Activated CD4-positive, alpha-beta T cell treated with anti-CD3 and anti-CD28 coated beads, Interleukin-2, amount 10 ng/mL, durations not matched to agents 24 days and 14 days (primary cell): ENCODE measurements at regions of chr16 and their contacts with region 1.

Region 1: GRCh38 chr16:28277537-28278388 is 14.6 kb upstream of the SBK1 start:
- DNase-seq: peak; percentile 95
- H3K4me3 Mint-ChIP-seq: peak overlapping the region; percentile 77
- H3K27ac Mint-ChIP-seq: peak overlapping the region; percentile 60
- H3K4me1 Mint-ChIP-seq: peaks cover 28% of the 10 kb centered on the region
- H3K27me3 Mint-ChIP-seq: peaks cover 23% of the 10 kb centered on the region

Region 2: DNA sequence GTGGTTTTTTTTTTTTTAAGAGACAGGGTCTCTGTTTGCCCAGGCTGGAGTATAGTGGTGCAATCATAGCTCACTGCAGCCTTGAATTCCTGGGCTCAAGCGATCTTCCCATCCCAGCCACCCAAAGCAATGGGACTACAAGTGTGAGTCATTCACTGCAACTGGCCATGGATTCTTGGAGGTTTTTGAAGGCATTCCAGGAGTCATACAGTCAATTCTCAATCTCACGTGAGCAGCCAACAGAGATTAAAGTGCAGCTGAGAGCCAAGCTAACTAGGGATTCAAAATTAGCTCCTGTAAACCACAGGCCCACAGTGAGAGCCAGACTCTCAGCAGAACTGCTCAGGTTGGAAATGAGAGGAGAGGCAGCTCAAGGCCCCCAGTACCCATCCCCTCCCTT is 96.2 kb before region 1 on chr16:
- intact Hi-C with region 1: no loop called
- DNase-seq: no peak
- H3K4me3 Mint-ChIP-seq: peak overlapping the region; percentile 82
- H3K27ac Mint-ChIP-seq: peak overlapping the region; percentile 99
- H3K4me1 Mint-ChIP-seq: peaks cover 69% of the 10 kb centered on the region
- H3K27me3 Mint-ChIP-seq: no peaks in the 10 kb centered on the region

Region 3: GRCh38 chr16:28237754-28238357 is 39.9 kb before region 1 on chr16:
- intact Hi-C with region 1: no loop called
- DNase-seq: no peak
- H3K4me3 Mint-ChIP-seq: no peak overlapping the region
- H3K27ac Mint-ChIP-seq: no peak overlapping the region
- H3K4me1 Mint-ChIP-seq: no peaks in the 10 kb centered on the region
- H3K27me3 Mint-ChIP-seq: peaks cover 4% of the 10 kb centered on the region

Region 4: GRCh38 chr16:28317040-28317880 is 39.5 kb after region 1 on chr16:
- intact Hi-C with region 1: loop called (anchors 1 kb)
- DNase-seq: peak; percentile 92
- H3K4me3 Mint-ChIP-seq: no peak overlapping the region
- H3K27ac Mint-ChIP-seq: peak overlapping the region; percentile 48
- H3K4me1 Mint-ChIP-seq: peaks cover 6% of the 10 kb centered on the region
- H3K27me3 Mint-ChIP-seq: no peaks in the 10 kb centered on the region